IMR-90 (cell line): ENCODE measurements at regions of chr17 and their contacts with region 1.

Region 1: DNA sequence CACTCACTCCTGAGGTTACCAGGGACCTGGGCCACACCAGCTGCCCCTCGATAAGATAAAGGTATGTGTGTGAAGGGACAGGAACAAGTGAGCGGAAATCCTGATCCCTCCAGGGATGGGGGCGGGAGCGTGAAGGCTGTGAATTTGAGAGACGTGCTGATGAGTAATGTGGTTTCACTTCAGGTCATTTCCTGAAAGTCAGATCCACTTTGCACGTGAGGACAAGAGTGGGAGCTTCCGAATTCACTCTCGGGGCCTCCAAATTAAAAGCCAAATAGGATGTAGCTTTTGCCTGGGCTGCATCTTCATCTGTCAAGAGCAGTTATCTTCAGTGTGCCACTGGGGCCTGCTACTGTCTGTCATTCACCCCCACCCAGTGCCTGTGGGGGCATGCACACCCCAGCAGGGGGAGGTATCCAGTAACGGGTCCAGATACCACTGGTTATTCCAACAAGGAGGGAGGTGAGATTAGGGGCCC is 87.4 kb upstream of the LHX1 start:
- DNase-seq: peak; percentile 63
- ATAC-seq: no peak
- H3K4me3 ChIP-seq: no peak overlapping the region
- H3K27ac ChIP-seq: no peak overlapping the region
- H3K4me1 ChIP-seq: peaks cover 13% of the 10 kb centered on the region
- H3K27me3 ChIP-seq: no peaks in the 10 kb centered on the region; the same call in 1 of the 2 replicates
- CTCF ChIP-seq: no peak
- POLR2A ChIP-seq: no peak
- RAD21 ChIP-seq: no peak

Region 2: GRCh38 chr17:36792849-36793248 is 57.1 kb before region 1 on chr17:
- CTCF ChIA-PET with region 1: no interaction called
- POLR2A ChIA-PET with region 1: no interaction called
- dilution Hi-C with region 1: no loop called
- in situ Hi-C with region 1: no loop called
- intact Hi-C with region 1: no loop called
- DNase-seq: no peak
- ATAC-seq: no peak
- H3K4me3 ChIP-seq: no peak overlapping the region
- H3K27ac ChIP-seq: no peak overlapping the region
- H3K4me1 ChIP-seq: no peaks in the 10 kb centered on the region
- H3K27me3 ChIP-seq: peaks cover 28% of the 10 kb centered on the region
- CTCF ChIP-seq: no peak
- POLR2A ChIP-seq: no peak
- RAD21 ChIP-seq: no peak

Region 3: DNA sequence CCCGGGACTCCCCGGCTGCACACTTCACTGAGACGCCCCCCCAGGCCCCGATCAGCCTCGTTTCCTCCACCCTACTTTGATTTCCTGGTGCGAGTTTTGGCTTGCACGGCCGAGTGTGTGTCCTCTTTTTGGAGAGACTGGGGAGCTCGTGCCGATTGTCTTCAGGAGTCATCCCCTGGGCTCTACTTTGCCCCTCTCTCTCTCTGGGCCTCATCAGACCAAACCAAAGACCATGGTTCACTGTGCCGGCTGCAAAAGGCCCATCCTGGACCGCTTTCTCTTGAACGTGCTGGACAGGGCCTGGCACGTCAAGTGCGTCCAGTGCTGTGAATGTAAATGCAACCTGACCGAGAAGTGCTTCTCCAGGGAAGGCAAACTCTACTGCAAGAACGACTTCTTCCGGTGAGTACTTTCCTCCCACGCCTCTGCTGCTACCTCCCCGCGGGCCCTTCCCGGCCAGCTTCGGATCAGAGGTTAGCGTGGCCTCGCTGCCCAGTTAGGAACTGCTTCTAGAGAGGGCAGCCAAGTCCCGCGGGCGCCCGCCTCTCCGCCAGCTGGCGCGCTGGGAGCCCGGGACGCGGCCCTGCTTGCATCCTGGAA is 88.2 kb after region 1 on chr17:
- CTCF ChIA-PET with region 1: no interaction called
- POLR2A ChIA-PET with region 1: no interaction called
- dilution Hi-C with region 1: no loop called
- in situ Hi-C with region 1: no loop called
- intact Hi-C with region 1: loop called (anchors 10 kb)
- DNase-seq: peak; percentile 25
- ATAC-seq: no peak
- H3K4me3 ChIP-seq: no peak overlapping the region
- H3K27ac ChIP-seq: no peak overlapping the region
- H3K4me1 ChIP-seq: peaks cover 7% of the 10 kb centered on the region; the same call in 1 of the 2 replicates
- H3K27me3 ChIP-seq: peaks cover 99% of the 10 kb centered on the region
- CTCF ChIP-seq: no peak
- POLR2A ChIP-seq: no peak
- RAD21 ChIP-seq: no peak